ENCODE measurements at regions of chr3 and their contacts with region 1.

Region 1: GRCh38 chr3:151468284-151468917 is 7.5 kb upstream of the IGSF10 start:
- DNase-seq: peak; percentile 62
- H3K4me3 ChIP-seq: no peak overlapping the region
- H3K27ac ChIP-seq: no peak overlapping the region
- H3K4me1 ChIP-seq: no peaks in the 10 kb centered on the region
- H3K27me3 ChIP-seq: peaks cover 0 to 2% of the 10 kb centered on the region in 2 experiments
- CTCF ChIP-seq: peak; percentile 83 to 86
- POLR2A ChIP-seq: no peak

Region 2: GRCh38 chr3:151350656-151351618 is 117.5 kb before region 1 on chr3:
- CTCF ChIA-PET with region 1: no interaction called
- POLR2A ChIA-PET with region 1: no interaction called
- dilution Hi-C with region 1: no loop called
- intact Hi-C with region 1: no loop called
- DNase-seq: no peak
- H3K4me3 ChIP-seq: no peak overlapping the region
- H3K27ac ChIP-seq: no peak overlapping the region
- H3K4me1 ChIP-seq: no peaks in the 10 kb centered on the region
- H3K27me3 ChIP-seq: peaks cover 4 to 8% of the 10 kb centered on the region in 2 experiments
- CTCF ChIP-seq: no peak
- POLR2A ChIP-seq: no peak

Region 3: DNA sequence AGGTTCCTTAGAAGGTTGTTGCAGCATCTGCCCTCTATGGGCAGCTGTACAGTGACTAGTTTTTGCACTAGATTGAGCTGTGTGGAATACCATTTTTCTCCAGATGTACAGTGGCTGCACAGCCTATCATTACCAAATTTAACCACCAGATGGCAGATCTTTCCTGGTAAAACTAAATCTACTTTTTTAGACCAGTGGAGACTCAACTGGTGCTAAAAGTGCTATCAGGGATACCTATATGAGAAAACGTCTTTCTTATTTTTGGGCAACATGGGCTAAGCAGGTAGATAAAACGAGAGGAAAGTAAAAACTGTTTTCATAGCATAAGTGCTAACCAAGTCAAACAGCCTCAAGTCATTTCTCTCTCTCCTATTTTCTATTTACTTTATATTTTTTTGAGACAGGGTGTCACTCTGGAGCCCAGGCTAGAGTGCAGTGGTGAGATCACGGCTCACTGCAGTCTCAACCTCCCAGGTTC is 28.7 kb before region 1 on chr3:
- CTCF ChIA-PET with region 1: interaction called, 12 read pairs
- POLR2A ChIA-PET with region 1: no interaction called
- dilution Hi-C with region 1: no loop called
- intact Hi-C with region 1: loop called (anchors 1 kb)
- DNase-seq: peak; percentile 65
- H3K4me3 ChIP-seq: no peak overlapping the region
- H3K27ac ChIP-seq: no peak overlapping the region
- H3K4me1 ChIP-seq: no peaks in the 10 kb centered on the region
- H3K27me3 ChIP-seq: no peaks in the 10 kb centered on the region
- CTCF ChIP-seq: peak; percentile 45 to 51
- POLR2A ChIP-seq: no peak

Region 4: GRCh38 chr3:151751161-151751560 is 282.8 kb after region 1 on chr3:
- CTCF ChIA-PET with region 1: no interaction called
- POLR2A ChIA-PET with region 1: no interaction called
- dilution Hi-C with region 1: no loop called
- intact Hi-C with region 1: no loop called
- DNase-seq: no peak
- H3K4me3 ChIP-seq: no peak overlapping the region
- H3K27ac ChIP-seq: no peak overlapping the region
- H3K4me1 ChIP-seq: no peaks in the 10 kb centered on the region
- H3K27me3 ChIP-seq: no peaks in the 10 kb centered on the region
- CTCF ChIP-seq: no peak
- POLR2A ChIP-seq: no peak

Measured in endothelial cell of umbilical vein (primary cell).